AG04450 (cell line): ENCODE measurements at regions of chr14 and their contacts with region 1.

Region 1: DNA sequence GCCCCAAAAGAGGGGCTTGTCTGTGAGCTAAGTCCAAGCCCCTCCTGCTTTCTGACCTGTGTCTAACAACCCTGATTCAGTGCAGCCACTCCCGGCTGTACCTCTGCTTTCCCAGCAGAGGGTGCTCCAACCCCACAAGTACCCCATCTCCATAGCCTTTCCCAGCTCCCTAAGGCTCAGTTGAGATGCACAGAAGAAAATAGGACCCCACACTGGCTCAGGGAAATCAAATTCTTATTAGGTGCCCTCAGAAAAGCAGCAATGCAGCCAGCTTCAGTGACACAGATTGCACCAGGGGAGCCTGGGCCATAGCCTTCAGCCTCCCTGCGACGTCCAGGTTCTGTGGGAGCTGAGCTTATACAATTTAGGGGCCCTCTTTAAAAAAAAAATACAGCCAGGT is 49.9 kb downstream of the LRRC74A start:
- DNase-seq: peak; percentile 68
- H3K4me3 ChIP-seq: no peak overlapping the region
- H3K27ac ChIP-seq: no peak overlapping the region
- H3K27me3 ChIP-seq: peaks cover 2% of the 10 kb centered on the region
- CTCF ChIP-seq: peak; percentile 99

Region 2: GRCh38 chr14:76687611-76688382 is 188.3 kb before region 1 on chr14:
- CTCF ChIA-PET with region 1: no interaction called
- POLR2A ChIA-PET with region 1: no interaction called
- DNase-seq: no peak
- H3K4me3 ChIP-seq: no peak overlapping the region
- H3K27ac ChIP-seq: no peak overlapping the region
- H3K27me3 ChIP-seq: peaks cover 2% of the 10 kb centered on the region
- CTCF ChIP-seq: no peak

Region 3: GRCh38 chr14:76742966-76743365 is 133.1 kb before region 1 on chr14:
- CTCF ChIA-PET with region 1: no interaction called
- POLR2A ChIA-PET with region 1: no interaction called
- DNase-seq: no peak
- H3K4me3 ChIP-seq: no peak overlapping the region
- H3K27ac ChIP-seq: no peak overlapping the region
- H3K27me3 ChIP-seq: peaks cover 2% of the 10 kb centered on the region
- CTCF ChIP-seq: no peak

Region 4: GRCh38 chr14:76856769-76857168 is 19.3 kb before region 1 on chr14:
- CTCF ChIA-PET with region 1: no interaction called
- POLR2A ChIA-PET with region 1: no interaction called
- DNase-seq: no peak
- H3K4me3 ChIP-seq: no peak overlapping the region
- H3K27ac ChIP-seq: no peak overlapping the region
- H3K27me3 ChIP-seq: peaks cover 21% of the 10 kb centered on the region
- CTCF ChIP-seq: no peak

Region 5: GRCh38 chr14:76904740-76905438 is 28.8 kb after region 1 on chr14:
- CTCF ChIA-PET with region 1: interaction called, 85 read pairs
- POLR2A ChIA-PET with region 1: interaction called, 3 read pairs
- DNase-seq: peak; percentile 92
- H3K4me3 ChIP-seq: peak overlapping the region; percentile 42
- H3K27ac ChIP-seq: peak overlapping the region; percentile 99
- H3K27me3 ChIP-seq: no peaks in the 10 kb centered on the region
- CTCF ChIP-seq: no peak

Region 6: GRCh38 chr14:77040059-77040740 is 164.1 kb after region 1 on chr14:
- CTCF ChIA-PET with region 1: interaction called, 16 read pairs
- POLR2A ChIA-PET with region 1: no interaction called
- DNase-seq: peak; percentile 97
- H3K4me3 ChIP-seq: peak overlapping the region; percentile 51
- H3K27ac ChIP-seq: peak overlapping the region; percentile 99
- H3K27me3 ChIP-seq: no peaks in the 10 kb centered on the region
- CTCF ChIP-seq: no peak

Region 7: DNA sequence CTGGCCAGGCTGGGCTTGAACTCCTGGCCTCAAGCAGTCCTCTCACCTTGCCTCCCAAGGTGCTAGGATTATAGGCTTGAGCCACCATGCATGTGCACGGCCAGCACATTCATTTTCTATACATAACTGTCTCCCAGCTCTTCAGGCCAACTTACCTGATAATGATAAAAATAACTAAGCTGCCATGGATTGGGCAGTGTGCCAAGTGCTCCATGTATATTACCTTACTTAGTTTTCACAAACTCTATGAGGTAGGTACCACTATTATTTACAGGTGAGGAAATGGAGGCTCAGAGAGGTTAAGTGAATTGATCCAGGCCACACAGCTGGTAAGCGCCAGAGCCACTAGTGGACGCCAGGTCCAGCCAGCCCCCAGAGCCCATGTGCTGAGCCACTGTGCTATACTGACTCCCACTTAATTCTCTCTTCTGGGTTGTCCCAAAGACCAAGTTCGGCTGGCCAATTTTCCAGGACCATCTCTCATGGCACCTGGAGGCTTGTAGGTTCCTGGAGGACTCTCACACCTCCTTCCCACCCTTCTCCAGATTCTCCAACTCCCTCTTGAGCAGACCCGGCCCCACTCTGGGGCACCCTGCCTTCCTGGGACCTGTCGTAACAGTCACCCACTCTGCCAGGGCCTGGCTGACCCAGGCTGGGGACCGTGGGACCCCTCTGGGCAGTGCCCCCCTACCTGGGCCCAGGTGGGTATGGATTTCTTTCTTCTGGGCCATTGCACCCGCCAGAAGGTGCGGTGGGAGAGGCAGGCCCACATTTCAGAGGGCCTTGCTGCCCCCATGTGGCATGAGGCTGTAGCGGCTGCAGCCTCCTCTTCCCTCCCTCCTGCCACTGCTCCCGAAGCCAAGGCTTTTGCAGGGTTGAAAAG is 191.8 kb after region 1 on chr14:
- CTCF ChIA-PET with region 1: interaction called, 524 read pairs
- POLR2A ChIA-PET with region 1: interaction called, 9 read pairs
- DNase-seq: peak; percentile 30
- H3K4me3 ChIP-seq: no peak overlapping the region
- H3K27ac ChIP-seq: no peak overlapping the region
- H3K27me3 ChIP-seq: no peaks in the 10 kb centered on the region
- CTCF ChIP-seq: peak; percentile 90

Region 8: GRCh38 chr14:77124345-77125280 is 248.5 kb after region 1 on chr14:
- CTCF ChIA-PET with region 1: interaction called, 51 read pairs
- POLR2A ChIA-PET with region 1: no interaction called
- DNase-seq: no peak
- H3K4me3 ChIP-seq: peak overlapping the region; percentile 61
- H3K27ac ChIP-seq: no peak overlapping the region
- H3K27me3 ChIP-seq: peaks cover 43% of the 10 kb centered on the region
- CTCF ChIP-seq: no peak; the same call in 1 of the 2 replicates

Region 9: DNA sequence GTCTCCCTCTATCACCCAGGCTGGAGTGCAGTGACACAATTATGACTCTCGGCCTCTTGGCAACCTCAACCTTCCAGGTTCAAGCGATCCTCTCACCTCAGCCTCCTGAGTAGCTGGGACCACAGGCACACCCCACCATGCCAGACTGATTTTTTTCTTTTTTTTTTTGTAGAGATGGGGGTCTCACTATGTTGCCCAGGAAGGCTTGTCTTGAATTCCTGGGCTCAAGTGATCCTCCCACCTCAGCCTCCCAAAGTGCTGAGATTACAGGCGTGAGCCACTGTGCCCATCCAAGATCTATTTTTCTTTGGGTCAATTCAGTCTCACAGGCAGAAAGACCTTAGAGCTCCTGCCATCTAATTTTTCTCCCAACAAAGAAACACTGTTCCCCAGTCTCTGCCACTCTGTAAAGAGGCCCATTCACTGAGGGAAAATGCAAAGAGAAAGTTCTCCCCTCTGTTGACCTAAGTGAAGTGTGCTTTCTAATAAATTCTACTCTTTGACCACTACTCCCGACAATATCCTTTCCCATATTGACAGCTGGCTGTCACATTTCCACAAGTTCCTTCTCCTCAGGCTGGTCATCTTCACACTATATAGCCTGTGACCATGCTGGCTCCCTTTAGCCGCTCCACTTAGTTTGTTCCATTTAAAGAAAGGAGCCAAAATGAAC is 477.5 kb after region 1 on chr14:
- CTCF ChIA-PET with region 1: interaction called, 11 read pairs
- POLR2A ChIA-PET with region 1: no interaction called
- DNase-seq: no peak
- H3K4me3 ChIP-seq: no peak overlapping the region
- H3K27ac ChIP-seq: no peak overlapping the region
- H3K27me3 ChIP-seq: no peaks in the 10 kb centered on the region
- CTCF ChIP-seq: no peak